Body of pancreas (tissue), 4 donors: ENCODE measurements at regions of chr1 and their contacts with region 1.

Region 1: DNA sequence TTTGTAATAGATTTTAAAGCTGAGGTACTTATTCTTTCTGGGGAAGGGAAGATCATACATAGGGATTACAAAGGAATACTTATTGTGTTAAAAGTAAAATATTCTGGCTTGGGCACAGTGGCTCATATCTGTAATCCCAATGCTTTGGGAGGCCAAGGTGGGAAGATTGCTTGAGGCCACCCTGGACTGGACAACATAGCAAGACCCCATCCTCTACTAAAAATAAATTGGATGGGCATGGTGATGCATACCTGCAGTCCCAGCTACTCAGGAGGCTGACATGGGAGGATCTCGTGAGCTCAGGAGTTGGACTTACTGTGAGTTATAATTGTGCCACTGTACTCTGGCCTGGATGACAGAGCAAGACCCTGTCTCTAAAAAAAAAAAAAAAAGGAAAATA is 27.6 kb downstream of the GABPB2 start:
- DNase-seq: no peak
- ATAC-seq: no peak
- H3K4me3 ChIP-seq: no peak overlapping the region
- H3K27ac ChIP-seq: no peak overlapping the region
- H3K4me1 ChIP-seq: no peaks in the 10 kb centered on the region
- H3K27me3 ChIP-seq: no peaks in the 10 kb centered on the region
- CTCF ChIP-seq: no peak
- POLR2A ChIP-seq: no peak

Region 2: GRCh38 chr1:150863724-150864123 is 234.4 kb before region 1 on chr1:
- intact Hi-C with region 1: no loop called
- DNase-seq: no peak
- ATAC-seq: no peak
- H3K4me3 ChIP-seq: no peak overlapping the region
- H3K27ac ChIP-seq: no peak overlapping the region
- H3K4me1 ChIP-seq: no peaks in the 10 kb centered on the region
- H3K27me3 ChIP-seq: no peaks in the 10 kb centered on the region
- CTCF ChIP-seq: no peak
- POLR2A ChIP-seq: no peak

Region 3: DNA sequence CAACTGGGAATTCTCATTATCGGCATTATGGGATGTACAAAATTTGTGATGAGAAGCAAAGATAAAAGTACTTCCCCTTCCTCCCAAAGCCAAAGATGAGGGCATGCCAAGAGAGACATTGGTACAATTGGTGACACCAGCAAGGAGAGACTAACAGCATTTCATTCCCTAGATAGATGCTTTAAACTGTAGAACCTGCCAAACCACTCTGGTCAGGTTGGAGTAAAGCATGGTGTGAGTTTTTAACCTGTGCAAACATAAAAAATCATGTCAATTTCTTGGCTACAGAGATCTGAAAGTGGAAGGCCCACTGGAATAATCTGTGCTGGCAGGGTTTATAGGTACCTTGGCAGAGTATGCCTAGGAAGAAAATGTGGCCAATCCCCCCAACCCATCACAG is 191.8 kb before region 1 on chr1:
- intact Hi-C with region 1: no loop called
- DNase-seq: no peak
- ATAC-seq: no peak
- H3K4me3 ChIP-seq: no peak overlapping the region
- H3K27ac ChIP-seq: no peak overlapping the region
- H3K4me1 ChIP-seq: no peaks in the 10 kb centered on the region
- H3K27me3 ChIP-seq: no peaks in the 10 kb centered on the region
- CTCF ChIP-seq: no peak
- POLR2A ChIP-seq: no peak

Region 4: GRCh38 chr1:151156515-151156819 is 58.3 kb after region 1 on chr1 and contains the start of gene TNFAIP8L2:
- intact Hi-C with region 1: loop called (anchors 10 kb)
- DNase-seq: peak in 1 of 4 donors; percentile 65
- ATAC-seq: no peak
- H3K4me3 ChIP-seq: no peak within 1 kb of the TSS
- H3K27ac ChIP-seq: peak within 1 kb of the TSS in 1 of 4 donors; percentile 26
- H3K4me1 ChIP-seq: no peaks in the 10 kb centered on the region
- H3K27me3 ChIP-seq: no peaks in the 10 kb centered on the region
- CTCF ChIP-seq: no peak
- POLR2A ChIP-seq: no peak
- total RNA-seq, gene TNFAIP8L2: 0.99 to 1.6 TPM